ENCODE measurements at regions of chr9 and their contacts with region 1.

Region 1: GRCh38 chr9:6353851-6354686 is 25.9 kb downstream of the TPD52L3 start:
- DNase-seq: peak; percentile 52
- H3K4me3 ChIP-seq: no peak overlapping the region
- H3K27ac ChIP-seq: no peak overlapping the region
- H3K4me1 ChIP-seq: peaks cover 26% of the 10 kb centered on the region
- H3K27me3 ChIP-seq: no peaks in the 10 kb centered on the region
- CTCF ChIP-seq: peak; percentile 75

Region 2: GRCh38 chr9:6498982-6499381 is 144.9 kb after region 1 on chr9:
- CTCF ChIA-PET with region 1: interaction called, 6 read pairs
- dilution Hi-C with region 1: no loop called
- in situ Hi-C with region 1: no loop called
- intact Hi-C with region 1: loop called (anchors 5 kb)
- DNase-seq: peak; percentile 60
- H3K4me3 ChIP-seq: no peak overlapping the region
- H3K27ac ChIP-seq: peak overlapping the region; percentile 58
- H3K4me1 ChIP-seq: no peaks in the 10 kb centered on the region
- H3K27me3 ChIP-seq: no peaks in the 10 kb centered on the region
- CTCF ChIP-seq: no peak

Region 3: GRCh38 chr9:6566409-6567139 is 212.5 kb after region 1 on chr9:
- CTCF ChIA-PET with region 1: interaction called, 14 read pairs
- dilution Hi-C with region 1: no loop called
- in situ Hi-C with region 1: loop called (anchors 5 to 10 kb)
- intact Hi-C with region 1: loop called (anchors 1 kb)
- DNase-seq: peak; percentile 99
- H3K4me3 ChIP-seq: peak overlapping the region; percentile 42 to 45 (median 44)
- H3K27ac ChIP-seq: peak overlapping the region; percentile 100
- H3K4me1 ChIP-seq: peaks cover 39% of the 10 kb centered on the region
- H3K27me3 ChIP-seq: no peaks in the 10 kb centered on the region
- CTCF ChIP-seq: peak in 1 of 2 donors; percentile 20

Region 4: DNA sequence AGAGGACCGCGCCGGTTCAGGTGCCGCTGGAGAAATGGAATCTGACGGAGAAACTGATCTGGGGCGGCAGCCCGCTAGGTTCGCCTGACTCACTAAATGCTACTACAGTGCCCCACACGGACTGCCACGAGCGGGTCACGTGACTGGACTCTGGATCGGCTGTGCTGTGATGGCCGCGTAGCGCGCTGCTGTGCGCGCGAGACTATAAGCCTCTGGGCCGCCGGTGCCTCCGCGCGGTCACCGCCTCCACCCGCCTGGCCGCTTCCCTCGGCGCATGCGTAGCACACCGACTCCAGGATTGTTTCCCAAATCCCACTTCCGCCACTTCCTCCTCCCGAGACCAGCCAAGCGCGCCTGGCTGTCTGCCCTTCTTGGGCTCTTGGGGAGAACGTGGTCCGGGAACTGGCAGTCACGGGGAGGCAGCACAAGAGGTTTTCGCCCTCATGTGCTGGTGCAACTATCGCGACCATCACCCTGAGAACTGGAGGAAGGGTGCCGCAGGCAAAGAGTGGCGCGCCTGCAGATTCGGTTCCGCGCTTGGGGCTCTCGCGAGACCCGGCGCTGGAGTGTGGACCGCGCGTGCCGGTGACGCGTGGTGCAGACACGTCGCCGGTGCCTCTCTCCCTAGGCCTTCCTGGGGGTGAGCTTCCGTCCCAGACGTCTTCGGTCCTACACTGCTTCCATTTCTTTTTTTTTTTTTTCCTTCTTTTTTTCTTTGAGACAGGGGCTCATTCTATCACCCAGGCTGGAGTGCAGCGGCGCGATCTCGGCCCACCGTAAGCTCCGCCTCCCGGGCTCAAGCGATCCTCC is 327.3 kb after region 1 on chr9:
- CTCF ChIA-PET with region 1: no interaction called
- dilution Hi-C with region 1: no loop called
- in situ Hi-C with region 1: loop called in 1 of 2 experiments (anchors 25 kb)
- intact Hi-C with region 1: loop called (anchors 1 kb)
- DNase-seq: peak; percentile 96
- H3K4me3 ChIP-seq: peak overlapping the region; percentile 70 to 79 (median 75)
- H3K27ac ChIP-seq: peak overlapping the region; percentile 92
- H3K4me1 ChIP-seq: peaks cover 11% of the 10 kb centered on the region
- H3K27me3 ChIP-seq: no peaks in the 10 kb centered on the region
- CTCF ChIP-seq: no peak

Region 5: GRCh38 chr9:6739218-6739617 is 385.1 kb after region 1 on chr9:
- CTCF ChIA-PET with region 1: interaction called, 5 read pairs
- dilution Hi-C with region 1: no loop called
- in situ Hi-C with region 1: no loop called
- intact Hi-C with region 1: loop called (anchors 5 kb)
- DNase-seq: no peak
- H3K4me3 ChIP-seq: no peak overlapping the region
- H3K27ac ChIP-seq: no peak overlapping the region
- H3K4me1 ChIP-seq: no peaks in the 10 kb centered on the region
- H3K27me3 ChIP-seq: no peaks in the 10 kb centered on the region
- CTCF ChIP-seq: peak in 1 of 2 donors; percentile 40